Adrenal gland (tissue), 19 donors: ENCODE measurements at regions of chr18 and their contacts with region 1.

Region 1: DNA sequence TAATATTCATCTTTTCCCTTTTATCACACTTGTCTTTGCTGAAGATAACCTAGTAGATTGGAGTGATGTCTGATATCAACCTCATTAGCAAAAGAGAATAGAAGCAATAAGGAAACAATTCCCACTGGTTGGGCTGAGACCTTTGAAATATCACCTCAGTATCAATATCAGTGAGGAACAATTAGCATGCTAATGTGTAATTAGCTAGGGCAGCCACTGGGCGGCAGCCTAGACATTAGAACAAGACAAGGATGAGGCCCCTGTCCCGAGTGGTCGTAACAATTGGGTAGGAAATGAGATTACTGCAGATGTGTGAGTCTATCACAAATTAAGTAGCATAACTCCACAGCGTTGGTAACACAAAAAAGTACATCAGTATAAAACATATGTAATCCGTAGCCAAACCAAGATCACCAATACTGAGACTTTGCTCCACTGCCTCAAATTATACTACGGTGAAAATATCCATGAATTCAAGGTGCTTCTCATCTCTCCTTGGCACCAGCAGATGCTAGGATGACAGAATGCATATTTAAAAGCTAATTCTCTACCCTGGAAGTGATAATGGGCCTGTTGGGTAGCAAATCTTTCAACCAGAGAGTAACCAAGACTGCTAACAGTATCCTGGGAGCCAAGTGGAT is 99.1 kb downstream of the ALPK2 start:
- DNase-seq: peak; percentile 46 to 86 (median 65)
- H3K4me3 ChIP-seq: peak overlapping the region in 1 of 4 donors; percentile 2
- H3K27ac ChIP-seq: no peak overlapping the region
- H3K4me1 ChIP-seq: no peaks in the 10 kb centered on the region
- H3K27me3 ChIP-seq: no peaks in the 10 kb centered on the region
- CTCF ChIP-seq: peak; percentile 52 to 87 (median 78)
- POLR2A ChIP-seq: no peak

Region 2: GRCh38 chr18:58605027-58606020 is 75.5 kb after region 1 on chr18:
- intact Hi-C with region 1: no loop called
- DNase-seq: no peak
- H3K4me3 ChIP-seq: no peak overlapping the region
- H3K27ac ChIP-seq: no peak overlapping the region
- H3K4me1 ChIP-seq: no peaks in the 10 kb centered on the region
- H3K27me3 ChIP-seq: no peaks in the 10 kb centered on the region
- CTCF ChIP-seq: no peak
- POLR2A ChIP-seq: no peak

Region 3: GRCh38 chr18:58671111-58671631 is 141.3 kb after region 1 on chr18 and contains the start of gene MALT1:
- intact Hi-C with region 1: loop called in 1 of 2 experiments (anchors 10 kb)
- DNase-seq: peak; percentile 91 to 96 (median 93)
- H3K4me3 ChIP-seq: peak within 1 kb of the TSS; percentile 49 to 98 (median 76)
- H3K27ac ChIP-seq: peak within 1 kb of the TSS; percentile 90 to 99 (median 94)
- H3K4me1 ChIP-seq: peaks cover 5 to 11% of the 10 kb centered on the region in 2 donors
- H3K27me3 ChIP-seq: no peaks in the 10 kb centered on the region
- CTCF ChIP-seq: no peak
- POLR2A ChIP-seq: peak; percentile 82 to 92
- total RNA-seq, gene MALT1: 6.7 to 19.2 (median 9.8) TPM

Region 4: DNA sequence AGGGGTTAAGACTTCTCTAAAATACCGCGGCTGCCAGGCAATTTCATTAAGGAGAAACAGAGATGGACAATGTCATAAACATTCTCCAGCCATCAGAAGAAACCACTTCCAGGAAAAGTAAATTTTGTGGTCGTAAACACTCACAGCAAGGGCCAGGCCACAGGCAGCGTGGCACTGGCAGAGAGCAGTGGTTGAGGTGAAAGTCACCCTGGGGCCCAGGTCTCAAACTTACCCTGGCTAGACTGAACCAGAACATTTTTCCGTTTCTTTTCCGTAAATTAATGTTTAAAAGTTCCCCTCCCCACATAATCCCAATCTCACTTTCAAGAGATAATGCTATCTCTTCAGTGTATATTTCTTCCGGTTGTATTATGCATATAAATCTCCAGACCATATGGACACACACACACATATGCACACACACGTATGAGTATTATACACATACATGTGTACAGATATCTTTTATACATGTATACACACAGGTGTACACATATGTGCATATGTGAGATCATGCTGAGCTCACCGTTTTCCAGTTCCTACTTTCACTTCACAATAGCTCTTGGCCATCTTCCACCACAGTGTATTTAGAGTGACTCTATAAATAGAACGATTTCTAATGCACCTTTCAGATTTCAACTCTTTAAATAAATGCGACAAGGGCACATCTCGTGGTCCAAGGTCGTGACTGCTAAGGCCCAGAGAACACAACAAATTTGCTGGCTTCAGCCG is 231.6 kb after region 1 on chr18:
- intact Hi-C with region 1: loop called (anchors 2 to 5 kb)
- DNase-seq: peak in 1 of 7 donors; percentile 27
- H3K4me3 ChIP-seq: no peak overlapping the region
- H3K27ac ChIP-seq: no peak overlapping the region
- H3K4me1 ChIP-seq: no peaks in the 10 kb centered on the region
- H3K27me3 ChIP-seq: peaks cover 3% of the 10 kb centered on the region
- CTCF ChIP-seq: no peak
- POLR2A ChIP-seq: no peak

Region 5: GRCh38 chr18:58768293-58768974 is 238.6 kb after region 1 on chr18:
- intact Hi-C with region 1: loop called (anchors 2 to 5 kb)
- DNase-seq: peak; percentile 52 to 86 (median 72)
- H3K4me3 ChIP-seq: peak overlapping the region in 1 of 4 donors; percentile 42
- H3K27ac ChIP-seq: no peak overlapping the region
- H3K4me1 ChIP-seq: peaks cover 0 to 10% of the 10 kb centered on the region in 2 donors
- H3K27me3 ChIP-seq: no peaks in the 10 kb centered on the region
- CTCF ChIP-seq: peak; percentile 47 to 81 (median 65)
- POLR2A ChIP-seq: no peak